Panc1 (cell line): ENCODE measurements at regions of chr2 and their contacts with region 1.

Region 1: DNA sequence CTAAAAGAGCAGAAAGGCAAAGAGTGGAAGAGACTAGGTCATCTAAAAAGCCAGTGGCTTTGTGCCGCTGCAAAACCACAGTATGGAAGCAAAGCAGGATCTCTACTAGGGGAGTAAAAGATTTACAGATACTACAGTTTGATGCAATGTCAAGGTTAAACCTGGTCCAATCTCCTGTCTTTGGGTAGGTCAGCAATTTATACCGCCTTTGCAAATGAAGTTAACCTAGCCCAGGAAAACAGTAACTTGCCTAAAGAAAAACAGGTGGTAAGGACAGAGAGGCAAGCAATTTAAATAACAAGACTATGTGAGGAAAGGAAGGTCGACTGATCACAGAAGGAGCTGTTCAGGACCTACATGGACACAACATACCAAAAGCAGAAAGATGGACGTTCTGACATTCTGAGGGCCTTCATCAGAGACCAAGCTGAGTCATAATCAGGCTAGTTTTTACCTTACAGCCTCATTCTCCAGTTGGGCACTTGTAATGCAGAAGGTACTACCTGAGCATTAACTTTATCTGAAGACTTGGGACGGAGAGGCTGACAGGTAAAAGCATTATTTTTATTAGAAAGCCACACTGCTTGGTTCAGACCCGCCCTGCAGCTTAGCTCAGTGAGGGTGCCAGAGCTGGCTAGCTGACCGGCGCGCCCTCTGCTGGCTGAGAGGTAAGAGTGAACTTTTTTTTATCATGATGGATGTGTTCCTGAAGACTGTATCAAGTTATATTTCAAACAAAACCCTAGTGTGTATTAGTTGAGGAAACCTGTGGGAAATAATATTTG is 15.9 kb downstream of the CDKL4 start:
- DNase-seq: no peak
- ATAC-seq: peak; percentile 92
- H3K4me3 ChIP-seq: no peak overlapping the region
- H3K27ac ChIP-seq: peak overlapping the region; percentile 4; the same call in 1 of the 2 replicates
- H3K4me1 ChIP-seq: peaks cover 6% of the 10 kb centered on the region
- H3K27me3 ChIP-seq: no peaks in the 10 kb centered on the region
- CTCF ChIP-seq: peak; percentile 94

Region 2: GRCh38 chr2:38947240-38948239 is 280.3 kb before region 1 on chr2:
- CTCF ChIA-PET with region 1: interaction called, 31 read pairs
- POLR2A ChIA-PET with region 1: no interaction called
- in situ Hi-C with region 1: no loop called
- intact Hi-C with region 1: loop called (anchors 1 kb)
- DNase-seq: peak; percentile 78
- ATAC-seq: peak; percentile 98
- H3K4me3 ChIP-seq: no peak overlapping the region
- H3K27ac ChIP-seq: no peak overlapping the region
- H3K4me1 ChIP-seq: 0 out of 2 replicates have a peak, but pooled peaks cover 5% of the 10 kb centered on the region
- H3K27me3 ChIP-seq: no peaks in the 10 kb centered on the region; the same call in 1 of the 2 replicates
- CTCF ChIP-seq: peak; percentile 87

Region 3: DNA sequence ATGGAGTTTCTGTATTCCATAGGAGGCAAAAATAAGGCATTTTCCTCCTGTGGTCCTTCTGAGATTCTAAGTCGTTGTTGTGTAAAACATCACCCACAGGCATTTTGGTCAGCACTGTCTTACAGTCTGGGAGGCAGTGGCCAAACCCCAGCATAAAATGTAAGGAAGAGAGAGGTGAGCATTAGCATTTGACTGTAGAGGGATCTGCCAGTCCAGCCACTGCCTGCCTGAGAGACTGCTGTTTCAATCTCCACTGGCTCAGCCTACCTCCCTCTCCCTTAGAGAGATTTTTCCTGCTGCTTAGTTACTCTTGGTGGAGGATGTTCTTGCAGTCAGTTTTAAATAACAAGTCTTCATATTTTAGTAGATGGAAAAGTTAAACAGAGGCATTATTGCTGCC is 261.1 kb before region 1 on chr2:
- CTCF ChIA-PET with region 1: no interaction called
- POLR2A ChIA-PET with region 1: interaction called, 10 read pairs
- in situ Hi-C with region 1: no loop called
- intact Hi-C with region 1: no loop called
- DNase-seq: no peak
- ATAC-seq: no peak
- H3K4me3 ChIP-seq: no peak overlapping the region
- H3K27ac ChIP-seq: no peak overlapping the region
- H3K4me1 ChIP-seq: no peaks in the 10 kb centered on the region
- H3K27me3 ChIP-seq: no peaks in the 10 kb centered on the region
- CTCF ChIP-seq: no peak

Region 4: GRCh38 chr2:39059366-39059952 is 168.4 kb before region 1 on chr2:
- CTCF ChIA-PET with region 1: interaction called, 13 read pairs
- POLR2A ChIA-PET with region 1: interaction called, 4 read pairs
- in situ Hi-C with region 1: no loop called
- intact Hi-C with region 1: loop called (anchors 1 kb)
- DNase-seq: peak; percentile 20
- ATAC-seq: no peak
- H3K4me3 ChIP-seq: no peak overlapping the region
- H3K27ac ChIP-seq: no peak overlapping the region
- H3K4me1 ChIP-seq: no peaks in the 10 kb centered on the region
- H3K27me3 ChIP-seq: no peaks in the 10 kb centered on the region
- CTCF ChIP-seq: peak; percentile 66; the same call in 1 of the 2 replicates

Region 5: GRCh38 chr2:39124000-39124745 is 103.6 kb before region 1 on chr2:
- CTCF ChIA-PET with region 1: interaction called, 11 read pairs
- POLR2A ChIA-PET with region 1: interaction called, 4 read pairs
- in situ Hi-C with region 1: no loop called
- intact Hi-C with region 1: loop called (anchors 2 kb)
- DNase-seq: peak; percentile 82
- ATAC-seq: peak; percentile 89
- H3K4me3 ChIP-seq: peak overlapping the region; percentile 61 to 73
- H3K27ac ChIP-seq: peak overlapping the region; percentile 98
- H3K4me1 ChIP-seq: peaks cover 16% of the 10 kb centered on the region
- H3K27me3 ChIP-seq: no peaks in the 10 kb centered on the region
- CTCF ChIP-seq: peak; percentile 84

Region 6: DNA sequence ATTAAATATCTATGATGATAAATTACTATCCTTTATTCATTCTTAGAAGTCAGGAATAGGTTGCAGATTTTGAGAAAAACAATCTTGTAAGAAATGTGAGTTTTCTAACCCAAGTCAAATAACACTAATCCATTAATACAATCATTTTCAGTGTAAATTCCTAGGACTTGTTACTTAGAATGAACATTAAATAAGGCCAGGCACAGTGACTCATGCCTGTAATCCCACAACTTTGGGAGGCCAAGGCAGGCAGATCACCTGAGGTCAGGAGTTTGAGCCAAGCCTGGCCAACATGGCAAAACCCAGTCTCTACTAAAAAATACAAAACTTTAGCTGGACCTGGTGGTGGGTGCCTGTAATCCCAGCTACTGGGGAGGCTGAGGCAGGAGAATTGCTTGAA is 61.8 kb after region 1 on chr2:
- CTCF ChIA-PET with region 1: no interaction called
- POLR2A ChIA-PET with region 1: no interaction called
- in situ Hi-C with region 1: no loop called
- intact Hi-C with region 1: no loop called
- DNase-seq: no peak
- ATAC-seq: no peak
- H3K4me3 ChIP-seq: no peak overlapping the region
- H3K27ac ChIP-seq: no peak overlapping the region
- H3K4me1 ChIP-seq: no peaks in the 10 kb centered on the region
- H3K27me3 ChIP-seq: no peaks in the 10 kb centered on the region
- CTCF ChIP-seq: no peak

Region 7: DNA sequence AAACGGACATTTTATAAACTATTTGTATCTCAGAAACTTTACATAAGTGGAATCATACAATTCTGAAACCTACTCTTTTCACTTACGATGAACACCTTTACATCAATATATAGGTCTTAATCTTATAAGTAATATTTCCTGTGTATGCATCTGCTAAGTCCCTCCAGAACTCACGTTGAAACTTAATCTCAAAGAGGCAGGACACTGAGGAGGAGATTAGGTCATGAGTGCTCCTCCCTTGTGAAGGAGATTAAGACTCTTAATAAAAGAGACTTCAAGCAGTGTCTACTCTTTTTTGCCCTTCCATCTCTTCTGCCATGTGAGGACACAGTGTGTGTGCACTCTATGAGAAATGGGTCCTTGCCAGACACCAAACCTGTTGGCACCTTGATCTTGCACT is 110.7 kb after region 1 on chr2:
- CTCF ChIA-PET with region 1: no interaction called
- POLR2A ChIA-PET with region 1: no interaction called
- in situ Hi-C with region 1: no loop called
- intact Hi-C with region 1: no loop called
- DNase-seq: no peak
- ATAC-seq: no peak
- H3K4me3 ChIP-seq: no peak overlapping the region
- H3K27ac ChIP-seq: no peak overlapping the region
- H3K4me1 ChIP-seq: no peaks in the 10 kb centered on the region
- H3K27me3 ChIP-seq: no peaks in the 10 kb centered on the region
- CTCF ChIP-seq: no peak